H1 (cell line): ENCODE measurements at regions of chr18 and their contacts with region 1.

Region 1: GRCh38 chr18:31555971-31556747 is 35.5 kb upstream of the TTR start:
- DNase-seq: no peak
- H3K4me3 ChIP-seq: no peak overlapping the region
- H3K27ac ChIP-seq: no peak overlapping the region
- H3K4me1 ChIP-seq: peaks cover 1 to 9% (median 2%) of the 10 kb centered on the region in 4 experiments; a peak in 3 of 7 replicates
- H3K27me3 ChIP-seq: no peaks in the 10 kb centered on the region
- CTCF ChIP-seq: peak in 2 of 3 experiments; percentile 68; a peak in 3 of 4 replicates
- EP300 ChIP-seq: no peak
- POLR2A ChIP-seq: no peak
- RAD21 ChIP-seq: peak; percentile 92 to 94

Region 2: DNA sequence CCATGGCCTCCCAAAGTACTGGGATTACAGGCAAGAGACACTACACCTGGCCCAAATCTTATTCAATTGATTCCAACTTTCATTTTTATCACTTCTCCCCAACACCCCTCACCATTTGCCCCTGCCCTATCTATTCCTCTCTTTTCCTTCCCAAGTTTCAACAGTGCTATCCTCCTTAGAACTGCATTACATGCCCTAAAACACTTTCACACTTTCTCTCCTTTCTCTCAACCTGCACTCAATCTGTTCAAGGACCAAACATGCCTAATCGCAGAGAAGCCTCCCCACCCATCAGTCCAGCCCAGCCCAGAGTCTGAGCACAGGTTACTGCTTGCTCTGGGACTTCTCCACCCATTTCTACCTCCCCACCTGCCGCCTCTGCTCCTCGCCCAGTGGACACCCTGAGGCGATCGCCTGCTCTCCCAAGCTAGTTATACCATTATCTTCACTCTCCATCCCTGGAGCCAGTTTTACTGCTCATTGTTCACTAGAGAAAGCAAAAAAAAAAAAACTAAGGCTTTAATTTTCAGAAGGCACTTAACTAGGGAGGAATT is 261.9 kb before region 1 on chr18:
- CTCF ChIA-PET with region 1: no interaction called
- POLR2A ChIA-PET with region 1: no interaction called
- DNase-seq: no peak
- H3K4me3 ChIP-seq: no peak overlapping the region
- H3K27ac ChIP-seq: no peak overlapping the region
- H3K4me1 ChIP-seq: no peaks in the 10 kb centered on the region
- H3K27me3 ChIP-seq: no peaks in the 10 kb centered on the region
- CTCF ChIP-seq: no peak
- EP300 ChIP-seq: no peak
- POLR2A ChIP-seq: no peak
- RAD21 ChIP-seq: no peak

Region 3: GRCh38 chr18:31490387-31490786 is 65.8 kb before region 1 on chr18:
- CTCF ChIA-PET with region 1: no interaction called
- POLR2A ChIA-PET with region 1: no interaction called
- DNase-seq: no peak
- H3K4me3 ChIP-seq: no peak overlapping the region
- H3K27ac ChIP-seq: no peak overlapping the region
- H3K4me1 ChIP-seq: no peaks in the 10 kb centered on the region
- H3K27me3 ChIP-seq: no peaks in the 10 kb centered on the region
- CTCF ChIP-seq: no peak
- EP300 ChIP-seq: no peak
- POLR2A ChIP-seq: no peak
- RAD21 ChIP-seq: no peak

Region 4: GRCh38 chr18:31970617-31971016 is 414.5 kb after region 1 on chr18:
- CTCF ChIA-PET with region 1: interaction called, 14 read pairs
- POLR2A ChIA-PET with region 1: no interaction called
- DNase-seq: no peak
- H3K4me3 ChIP-seq: no peak overlapping the region
- H3K27ac ChIP-seq: no peak overlapping the region
- H3K4me1 ChIP-seq: no peaks in the 10 kb centered on the region
- H3K27me3 ChIP-seq: no peaks in the 10 kb centered on the region
- CTCF ChIP-seq: no peak
- EP300 ChIP-seq: no peak
- POLR2A ChIP-seq: no peak
- RAD21 ChIP-seq: no peak